Activated CD8-positive, alpha-beta T cell treated with anti-CD3 and anti-CD28 coated beads, Interleukin-2, amount 10 ng/mL, durations not matched to agents 7 days and 5 days (primary cell): ENCODE measurements at regions of chr12 and their contacts with region 1.

Region 1: DNA sequence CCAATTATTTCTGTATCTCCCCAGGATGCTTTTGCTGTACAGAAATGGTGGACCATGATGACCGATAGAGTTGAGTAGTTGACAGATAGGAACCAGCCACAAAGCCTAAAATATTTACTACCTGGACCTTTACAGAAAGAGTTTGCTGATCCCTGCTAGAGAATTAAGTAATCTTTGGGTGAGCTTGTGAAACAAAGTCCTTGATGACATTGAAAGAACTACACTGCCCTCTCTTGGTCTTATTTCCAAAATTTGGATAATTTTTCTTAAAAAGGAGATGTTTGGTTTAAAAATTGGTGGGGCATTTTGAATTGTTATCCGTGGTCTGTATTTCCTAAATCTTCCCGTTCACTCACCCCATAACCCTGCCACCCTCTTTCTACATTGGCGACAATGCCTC is 13.7 kb upstream of the TCTN1 start:
- DNase-seq: no peak
- ATAC-seq: no peak
- H3K4me3 Mint-ChIP-seq: no peak overlapping the region
- H3K27ac Mint-ChIP-seq: no peak overlapping the region
- H3K4me1 Mint-ChIP-seq: peaks cover 12% of the 10 kb centered on the region
- H3K27me3 Mint-ChIP-seq: no peaks in the 10 kb centered on the region

Region 2: GRCh38 chr12:110449799-110450497 is 150.3 kb before region 1 on chr12 and contains the start of gene ARPC3:
- CTCF ChIA-PET with region 1: interaction called, 144 read pairs
- POLR2A ChIA-PET with region 1: interaction called, 41 read pairs
- DNase-seq: peak; percentile 98
- ATAC-seq: peak; percentile 97
- H3K4me3 Mint-ChIP-seq: peak within 1 kb of the TSS; percentile 100
- H3K27ac Mint-ChIP-seq: peak within 1 kb of the TSS; percentile 100
- H3K4me1 Mint-ChIP-seq: peaks cover 45% of the 10 kb centered on the region
- H3K27me3 Mint-ChIP-seq: no peaks in the 10 kb centered on the region
- total RNA-seq, gene ARPC3: 437 to 458 TPM

Region 3: DNA sequence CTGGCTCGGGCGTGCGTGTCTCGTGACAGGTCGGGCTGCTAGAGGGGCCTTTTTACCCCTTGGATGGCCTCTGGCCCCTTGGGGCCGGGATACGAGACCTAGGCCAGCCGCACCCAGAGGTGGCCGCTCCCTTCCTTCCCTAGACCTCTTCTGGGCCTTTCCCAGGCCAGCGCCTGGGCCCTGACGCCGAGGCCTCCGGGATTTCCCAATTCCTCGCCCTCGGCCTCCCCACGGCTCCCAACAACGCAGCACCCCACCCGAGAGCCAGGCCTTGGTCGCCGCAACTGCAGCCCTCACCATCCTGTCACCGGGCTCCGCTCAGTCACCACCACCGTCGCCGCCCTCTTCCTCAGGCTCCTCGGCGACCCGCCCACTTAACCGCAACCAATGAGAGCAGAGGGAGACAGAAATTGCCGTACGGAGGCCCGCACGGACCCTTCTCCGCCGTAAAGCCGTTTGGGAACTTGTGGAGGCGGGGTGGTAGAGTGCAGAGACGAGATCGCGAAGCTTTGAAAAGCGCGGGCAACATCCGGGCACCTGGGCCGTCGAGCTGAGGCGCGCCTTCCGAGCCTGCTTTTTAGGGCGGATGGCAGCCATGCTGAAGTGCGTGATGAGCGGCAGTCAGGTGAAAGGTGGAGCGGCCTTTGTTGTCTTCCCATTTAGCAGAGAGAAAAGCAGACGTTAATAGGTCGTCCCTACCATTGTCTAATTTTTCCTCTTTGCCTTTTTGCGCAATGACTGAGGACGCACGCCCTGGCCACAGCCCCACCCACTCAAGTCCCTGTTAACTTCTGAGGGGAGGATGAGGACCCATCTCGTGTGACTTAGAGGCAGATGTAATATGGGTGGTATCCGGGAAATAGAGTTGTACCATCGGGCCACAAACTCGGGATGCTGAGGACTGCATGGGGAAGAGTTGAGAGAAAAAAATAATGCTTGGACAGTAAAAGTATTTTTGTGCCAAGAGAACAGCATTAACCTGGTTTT is 98.2 kb before region 1 on chr12 and contains the starts of genes RAD9B and VPS29:
- CTCF ChIA-PET with region 1: interaction called, 266 read pairs
- POLR2A ChIA-PET with region 1: interaction called, 9 read pairs
- DNase-seq: peak; percentile 100
- ATAC-seq: peak; percentile 98
- H3K4me3 Mint-ChIP-seq: peak within 1 kb of the TSS; percentile 97
- H3K27ac Mint-ChIP-seq: peak within 1 kb of the TSS; percentile 99
- H3K4me1 Mint-ChIP-seq: peaks cover 40% of the 10 kb centered on the region
- H3K27me3 Mint-ChIP-seq: no peaks in the 10 kb centered on the region
- total RNA-seq, gene RAD9B: 0.68 to 2.3 TPM
- total RNA-seq, gene VPS29: 126 to 128 TPM

Region 4: GRCh38 chr12:110543252-110543959 is 56.8 kb before region 1 on chr12:
- CTCF ChIA-PET with region 1: interaction called, 259 read pairs
- POLR2A ChIA-PET with region 1: no interaction called
- DNase-seq: no peak
- ATAC-seq: no peak
- H3K4me3 Mint-ChIP-seq: no peak overlapping the region
- H3K27ac Mint-ChIP-seq: no peak overlapping the region
- H3K4me1 Mint-ChIP-seq: peaks cover 34% of the 10 kb centered on the region
- H3K27me3 Mint-ChIP-seq: no peaks in the 10 kb centered on the region

Region 5: GRCh38 chr12:110583137-110584059 is 16.9 kb before region 1 on chr12 and contains the start of gene PPTC7:
- CTCF ChIA-PET with region 1: interaction called, 47 read pairs
- POLR2A ChIA-PET with region 1: interaction called, 4 read pairs
- DNase-seq: peak; percentile 98
- ATAC-seq: peak; percentile 95
- H3K4me3 Mint-ChIP-seq: peak within 1 kb of the TSS; percentile 92
- H3K27ac Mint-ChIP-seq: peak within 1 kb of the TSS; percentile 88
- H3K4me1 Mint-ChIP-seq: peaks cover 64% of the 10 kb centered on the region
- H3K27me3 Mint-ChIP-seq: no peaks in the 10 kb centered on the region
- total RNA-seq, gene PPTC7: 24.4 to 26.8 TPM

Region 6: DNA sequence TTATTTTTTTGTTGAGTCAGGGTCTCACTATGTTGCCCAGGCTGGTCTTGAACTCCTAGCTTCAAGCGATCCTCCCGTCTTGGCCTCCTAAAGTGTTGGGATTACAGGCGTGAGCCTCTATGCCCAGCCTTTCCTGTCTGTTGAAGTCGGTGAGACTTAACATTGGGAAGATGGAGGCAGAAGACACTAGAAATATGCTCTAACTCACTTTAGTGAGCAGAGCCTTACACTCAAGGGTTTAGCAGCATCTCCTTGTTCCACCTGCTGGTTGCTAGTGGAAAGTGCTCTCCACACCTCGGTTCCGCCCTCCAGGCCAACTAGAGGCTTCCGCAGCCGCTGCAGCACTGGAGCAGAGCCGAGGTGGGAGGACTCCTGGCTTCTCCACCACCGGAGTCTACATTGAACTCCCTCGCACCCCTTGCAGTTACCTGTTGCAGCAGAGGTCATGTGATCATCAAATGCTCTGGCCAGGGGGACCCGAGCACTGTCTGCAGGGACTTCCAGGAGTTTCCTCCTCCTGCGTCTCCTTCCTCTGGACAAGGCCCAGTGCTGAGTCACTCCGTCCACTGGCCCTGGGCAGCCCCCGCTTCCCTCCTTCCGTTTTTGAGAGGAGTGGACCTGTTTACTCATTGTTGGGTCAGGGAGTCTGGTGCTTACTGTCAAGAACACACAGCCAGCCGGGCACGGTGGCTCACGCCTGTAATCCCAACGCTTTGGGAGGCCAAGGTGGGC is 98.1 kb after region 1 on chr12:
- CTCF ChIA-PET with region 1: interaction called, 12 read pairs
- POLR2A ChIA-PET with region 1: no interaction called
- DNase-seq: peak; percentile 92
- ATAC-seq: peak; percentile 100
- H3K4me3 Mint-ChIP-seq: no peak overlapping the region
- H3K27ac Mint-ChIP-seq: peak overlapping the region; percentile 78
- H3K4me1 Mint-ChIP-seq: peaks cover 23% of the 10 kb centered on the region
- H3K27me3 Mint-ChIP-seq: no peaks in the 10 kb centered on the region

Region 7: GRCh38 chr12:110718222-110718908 is 118.1 kb after region 1 on chr12:
- CTCF ChIA-PET with region 1: no interaction called
- POLR2A ChIA-PET with region 1: no interaction called
- DNase-seq: no peak
- ATAC-seq: no peak
- H3K4me3 Mint-ChIP-seq: no peak overlapping the region
- H3K27ac Mint-ChIP-seq: no peak overlapping the region
- H3K4me1 Mint-ChIP-seq: no peaks in the 10 kb centered on the region
- H3K27me3 Mint-ChIP-seq: no peaks in the 10 kb centered on the region